GM13976 (cell line): ENCODE measurements at regions of chrX and their contacts with region 1.

Region 1: GRCh38 chrX:24241822-24242648 is 71.8 kb downstream of the SUPT20HL2 start:
- DNase-seq: peak; percentile 42
- CTCF ChIP-seq: peak; percentile 29

Region 2: DNA sequence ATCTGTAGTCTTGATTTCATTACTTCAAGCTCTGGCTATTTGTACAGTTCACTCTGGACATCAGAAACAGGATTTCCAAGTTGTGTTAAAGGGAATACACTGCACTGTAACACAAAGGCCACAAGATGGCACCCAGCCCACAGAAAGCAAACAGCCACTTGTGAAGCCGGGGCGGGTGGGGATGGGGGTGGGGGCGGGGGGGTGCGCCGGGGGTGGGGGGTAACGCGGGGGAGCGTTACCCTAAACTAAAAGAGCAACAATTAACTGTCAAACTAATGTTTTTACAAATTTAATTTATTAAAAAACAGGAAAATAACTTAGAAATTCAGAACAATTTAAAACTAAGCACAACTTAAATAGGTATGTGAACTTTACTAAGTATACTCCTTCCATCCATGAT is 547.4 kb before region 1 on chrX:
- in situ Hi-C with region 1: loop called (anchors 25 kb)
- DNase-seq: peak; percentile 68
- CTCF ChIP-seq: peak; percentile 66

Region 3: GRCh38 chrX:23907498-23908218 is 334.4 kb before region 1 on chrX and contains the starts of genes APOO and CXorf58:
- in situ Hi-C with region 1: loop called (anchors 25 kb)
- DNase-seq: peak; percentile 91
- CTCF ChIP-seq: peak; percentile 63

Region 4: DNA sequence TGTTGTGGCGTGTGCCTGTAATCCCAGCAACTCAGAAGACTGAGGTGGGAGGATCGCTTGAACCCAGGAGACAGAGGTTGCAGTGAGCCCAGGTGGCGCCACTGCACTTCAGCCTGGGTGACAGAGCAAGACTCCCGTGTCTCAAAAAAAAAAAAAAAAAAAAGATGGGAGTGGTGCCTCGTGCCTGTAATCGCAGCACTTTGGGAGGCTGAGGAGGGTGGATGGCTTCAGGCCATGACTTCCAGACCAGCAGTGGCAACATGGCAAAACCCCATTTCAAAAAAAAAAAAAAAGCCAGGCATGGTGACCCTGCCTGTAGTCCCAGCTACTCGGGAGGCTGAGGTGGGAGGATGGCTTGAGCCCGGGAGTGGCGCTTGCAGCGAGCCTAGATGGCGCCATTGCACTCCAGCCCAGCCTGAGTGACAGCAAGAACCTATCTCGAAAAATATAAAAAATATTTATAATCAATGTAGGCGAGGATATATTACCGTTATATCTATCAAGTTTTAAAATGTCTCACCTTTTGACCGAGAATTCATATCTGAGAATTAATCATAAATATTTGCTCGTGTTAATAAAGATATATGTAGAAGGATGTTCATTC is 160.3 kb before region 1 on chrX:
- in situ Hi-C with region 1: loop called (anchors 25 kb)
- DNase-seq: no peak
- CTCF ChIP-seq: peak; percentile 71

Region 5: GRCh38 chrX:24294620-24295019 is 52.6 kb after region 1 on chrX:
- in situ Hi-C with region 1: no loop called
- DNase-seq: no peak
- CTCF ChIP-seq: no peak

Region 6: GRCh38 chrX:24332878-24333277 is 90.8 kb after region 1 on chrX:
- in situ Hi-C with region 1: no loop called
- DNase-seq: no peak
- CTCF ChIP-seq: no peak